Activated CD8-positive, alpha-beta T cell treated with anti-CD3 and anti-CD28 coated beads, Interleukin-2, amount 10 ng/mL, durations not matched to agents 7 days and 5 days (primary cell): ENCODE measurements at regions of chr3 and their contacts with region 1.

Region 1: DNA sequence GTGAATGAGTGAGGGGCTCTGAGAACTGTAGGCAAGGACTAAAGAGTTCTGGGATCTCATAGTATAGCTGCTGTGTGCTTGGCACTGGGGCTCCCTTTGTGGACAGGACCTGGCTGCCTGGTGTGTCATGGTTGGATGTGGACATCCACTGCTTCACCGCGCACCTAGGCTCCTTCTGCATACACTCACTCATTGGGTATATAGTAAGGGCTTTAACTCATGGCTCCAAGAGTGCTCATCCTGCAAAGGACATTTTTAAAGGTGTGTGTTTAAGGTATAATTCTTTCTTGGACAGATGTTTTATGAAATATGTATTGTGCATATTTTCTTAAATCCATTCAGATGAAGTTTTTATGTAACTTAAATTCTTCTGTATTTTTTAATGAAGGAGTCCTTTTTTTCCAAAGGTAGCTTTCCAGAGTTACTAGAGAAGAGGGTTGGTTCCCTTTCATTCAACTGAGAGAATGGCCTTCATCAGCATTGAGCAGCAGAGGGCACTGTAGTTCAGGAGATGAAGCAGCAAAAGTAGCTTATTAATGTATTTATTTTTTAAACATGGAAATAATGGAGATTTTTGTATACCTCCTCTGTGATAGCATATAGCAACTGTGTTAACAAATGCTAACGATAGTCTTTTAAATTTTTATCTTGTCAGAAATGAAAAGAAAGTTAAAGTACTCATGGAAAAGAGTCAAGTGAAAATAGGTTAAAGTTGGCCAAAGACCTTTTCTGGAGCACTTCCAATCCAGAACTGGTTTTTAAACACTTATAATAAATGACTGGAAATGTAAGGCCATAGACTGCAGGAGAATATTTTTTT is 25.2 kb downstream of the OXNAD1 start:
- DNase-seq: peak; percentile 78
- ATAC-seq: peak; percentile 17
- H3K4me3 Mint-ChIP-seq: peak overlapping the region; percentile 92
- H3K27ac Mint-ChIP-seq: peak overlapping the region; percentile 88
- H3K4me1 Mint-ChIP-seq: peaks cover 55% of the 10 kb centered on the region
- H3K27me3 Mint-ChIP-seq: no peaks in the 10 kb centered on the region

Region 2: DNA sequence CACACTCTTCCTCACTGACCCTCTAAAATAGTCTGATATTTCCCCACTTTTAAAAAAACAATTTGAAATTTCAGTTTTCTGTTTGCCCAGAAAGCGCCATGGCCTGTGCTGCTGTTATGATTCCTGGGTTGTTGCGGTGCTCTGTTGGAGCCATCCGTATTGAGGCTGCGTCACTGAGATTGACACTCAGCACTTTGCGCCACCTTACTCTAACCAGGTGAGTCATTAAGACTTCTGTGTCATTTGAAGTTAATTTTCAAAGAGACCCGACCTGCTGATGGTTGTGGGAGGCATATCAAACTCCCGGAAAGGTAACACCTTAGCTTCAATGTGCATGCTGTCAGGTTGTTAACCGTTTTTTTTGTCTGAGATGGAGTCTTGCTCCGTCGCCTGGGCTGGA is 19.4 kb before region 1 on chr3:
- CTCF ChIA-PET with region 1: interaction called, 114 read pairs
- POLR2A ChIA-PET with region 1: interaction called, 12 read pairs
- DNase-seq: no peak
- ATAC-seq: no peak
- H3K4me3 Mint-ChIP-seq: no peak overlapping the region
- H3K27ac Mint-ChIP-seq: no peak overlapping the region
- H3K4me1 Mint-ChIP-seq: peaks cover 22% of the 10 kb centered on the region
- H3K27me3 Mint-ChIP-seq: no peaks in the 10 kb centered on the region

Region 3: GRCh38 chr3:16309558-16309957 is 19.3 kb after region 1 on chr3:
- CTCF ChIA-PET with region 1: interaction called, 264 read pairs
- POLR2A ChIA-PET with region 1: interaction called, 15 read pairs
- DNase-seq: peak; percentile 81
- ATAC-seq: peak; percentile 79
- H3K4me3 Mint-ChIP-seq: peak overlapping the region; percentile 76
- H3K27ac Mint-ChIP-seq: peak overlapping the region; percentile 93
- H3K4me1 Mint-ChIP-seq: peaks cover 94% of the 10 kb centered on the region
- H3K27me3 Mint-ChIP-seq: no peaks in the 10 kb centered on the region

Region 4: DNA sequence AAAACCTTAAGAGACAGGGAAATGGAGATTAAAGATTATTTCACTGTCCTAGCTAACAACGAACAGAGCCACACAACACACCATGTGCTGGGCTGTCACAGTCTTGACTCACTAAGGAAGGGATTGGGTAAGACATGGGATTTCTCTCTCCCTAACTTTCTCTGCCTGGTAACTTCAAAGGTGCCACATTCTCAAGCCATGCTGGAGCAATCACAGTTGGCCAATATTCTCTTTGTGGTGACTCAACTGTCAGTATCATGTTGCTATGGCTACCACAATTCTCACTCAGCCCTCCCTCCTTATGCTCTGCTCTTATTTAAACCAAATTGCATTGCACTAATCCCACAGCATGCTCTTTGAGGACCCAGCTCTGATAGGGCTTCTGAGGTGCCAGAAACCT is 48.8 kb after region 1 on chr3:
- CTCF ChIA-PET with region 1: interaction called, 14 read pairs
- POLR2A ChIA-PET with region 1: interaction called, 5 read pairs
- DNase-seq: peak; percentile 42
- ATAC-seq: peak; percentile 41
- H3K4me3 Mint-ChIP-seq: peak overlapping the region; percentile 10
- H3K27ac Mint-ChIP-seq: peak overlapping the region; percentile 90
- H3K4me1 Mint-ChIP-seq: peaks cover 56% of the 10 kb centered on the region
- H3K27me3 Mint-ChIP-seq: no peaks in the 10 kb centered on the region

Region 5: GRCh38 chr3:16516695-16517481 is 226.7 kb after region 1 on chr3:
- CTCF ChIA-PET with region 1: interaction called, 17 read pairs
- POLR2A ChIA-PET with region 1: interaction called, 3 read pairs
- DNase-seq: peak; percentile 58
- ATAC-seq: no peak
- H3K4me3 Mint-ChIP-seq: peak overlapping the region; percentile 54
- H3K27ac Mint-ChIP-seq: peak overlapping the region; percentile 86
- H3K4me1 Mint-ChIP-seq: peaks cover 64% of the 10 kb centered on the region
- H3K27me3 Mint-ChIP-seq: no peaks in the 10 kb centered on the region